ENCODE measurements at regions of chr17 and their contacts with region 1.

Region 1: DNA sequence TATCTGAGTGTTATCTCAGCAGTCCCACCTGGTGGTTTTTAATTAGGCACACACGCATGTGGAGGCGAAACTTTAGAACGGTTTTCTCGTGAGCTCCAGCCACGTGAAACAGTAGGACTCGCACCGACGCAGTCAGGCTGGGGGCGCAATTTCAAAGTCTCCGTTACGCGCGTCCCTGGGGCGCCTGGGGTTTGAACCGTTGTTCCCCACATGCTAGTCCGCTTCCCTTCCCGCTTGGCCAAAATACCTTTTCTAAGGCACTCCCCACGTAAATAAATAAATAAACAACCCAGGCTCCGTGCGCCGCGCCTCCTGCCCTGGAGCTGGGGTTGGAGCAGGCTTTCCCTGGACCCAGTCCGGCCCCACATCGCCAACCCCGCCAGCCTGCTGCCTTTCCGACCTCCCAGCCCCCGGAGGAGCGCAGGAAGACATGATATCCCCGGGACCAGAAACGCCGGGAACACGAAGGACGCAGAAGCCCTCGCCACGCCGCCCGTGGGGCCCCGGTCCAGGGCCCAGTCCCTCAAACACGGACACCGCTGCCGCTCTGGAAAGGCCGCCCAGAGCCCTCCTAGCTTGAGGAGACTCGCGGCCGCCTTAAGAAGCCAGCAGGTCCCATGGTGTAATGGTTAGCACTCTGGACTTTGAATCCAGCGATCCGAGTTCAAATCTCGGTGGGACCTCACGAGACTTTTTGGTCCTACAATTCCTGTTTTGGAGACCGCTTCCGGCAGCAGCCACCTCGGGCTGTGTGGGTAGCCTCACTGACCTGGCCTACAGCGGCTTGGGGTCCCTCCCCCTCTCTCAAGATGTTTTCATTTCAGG is 18.2 kb downstream of the GNGT2 start:
- DNase-seq: peak; percentile 90
- H3K4me3 Mint-ChIP-seq: peak overlapping the region; percentile 85
- H3K27ac Mint-ChIP-seq: peak overlapping the region; percentile 98
- H3K4me1 Mint-ChIP-seq: peaks cover 48% of the 10 kb centered on the region
- H3K27me3 Mint-ChIP-seq: no peaks in the 10 kb centered on the region

Region 2: GRCh38 chr17:49157784-49158183 is 34.3 kb before region 1 on chr17:
- CTCF ChIA-PET with region 1: no interaction called
- POLR2A ChIA-PET with region 1: no interaction called
- DNase-seq: no peak
- H3K4me3 Mint-ChIP-seq: no peak overlapping the region
- H3K27ac Mint-ChIP-seq: no peak overlapping the region
- H3K4me1 Mint-ChIP-seq: no peaks in the 10 kb centered on the region
- H3K27me3 Mint-ChIP-seq: peaks cover 31% of the 10 kb centered on the region

Region 3: GRCh38 chr17:49170216-49170615 is 21.9 kb before region 1 on chr17:
- CTCF ChIA-PET with region 1: no interaction called
- POLR2A ChIA-PET with region 1: no interaction called
- DNase-seq: no peak
- H3K4me3 Mint-ChIP-seq: no peak overlapping the region
- H3K27ac Mint-ChIP-seq: no peak overlapping the region
- H3K4me1 Mint-ChIP-seq: no peaks in the 10 kb centered on the region
- H3K27me3 Mint-ChIP-seq: peaks cover 56% of the 10 kb centered on the region

Region 4: GRCh38 chr17:49180303-49180702 is 11.8 kb before region 1 on chr17:
- CTCF ChIA-PET with region 1: interaction called, 17 read pairs
- POLR2A ChIA-PET with region 1: no interaction called
- DNase-seq: peak; percentile 65
- H3K4me3 Mint-ChIP-seq: no peak overlapping the region
- H3K27ac Mint-ChIP-seq: no peak overlapping the region
- H3K4me1 Mint-ChIP-seq: peaks cover 4% of the 10 kb centered on the region
- H3K27me3 Mint-ChIP-seq: peaks cover 11% of the 10 kb centered on the region

Region 5: GRCh38 chr17:49210158-49211029 is 18.3 kb after region 1 on chr17 and contains the starts of genes ABI3 and GNGT2:
- CTCF ChIA-PET with region 1: interaction called, 23 read pairs
- POLR2A ChIA-PET with region 1: interaction called, 5 read pairs
- DNase-seq: peak; percentile 80
- H3K4me3 Mint-ChIP-seq: peak within 1 kb of the TSS; percentile 95
- H3K27ac Mint-ChIP-seq: peak within 1 kb of the TSS; percentile 60
- H3K4me1 Mint-ChIP-seq: peaks cover 69% of the 10 kb centered on the region
- H3K27me3 Mint-ChIP-seq: no peaks in the 10 kb centered on the region
- total RNA-seq, gene ABI3: 58.4 to 59.4 TPM
- total RNA-seq, gene GNGT2: 15.0 to 15.9 TPM

Region 6: GRCh38 chr17:49239963-49240362 is 47.8 kb after region 1 on chr17:
- CTCF ChIA-PET with region 1: no interaction called
- POLR2A ChIA-PET with region 1: no interaction called
- DNase-seq: no peak
- H3K4me3 Mint-ChIP-seq: no peak overlapping the region
- H3K27ac Mint-ChIP-seq: no peak overlapping the region
- H3K4me1 Mint-ChIP-seq: no peaks in the 10 kb centered on the region
- H3K27me3 Mint-ChIP-seq: peaks cover 10% of the 10 kb centered on the region